Motor neuron (in vitro differentiated cells): ENCODE measurements at regions of chr7 and their contacts with region 1.

Region 1: GRCh38 chr7:117119192-117119924 is 166.1 kb downstream of the ST7 start:
- ATAC-seq: peak in 2 of 8 experiments; percentile 26 to 32
- H3K4me3 ChIP-seq: no peak overlapping the region
- H3K27ac ChIP-seq: no peak overlapping the region
- H3K4me1 ChIP-seq: peaks cover 2 to 9% of the 10 kb centered on the region in 2 donors

Region 2: GRCh38 chr7:116636997-116637396 is 482.4 kb before region 1 on chr7:
- in situ Hi-C with region 1: no loop called
- ATAC-seq: no peak
- H3K4me3 ChIP-seq: no peak overlapping the region
- H3K27ac ChIP-seq: no peak overlapping the region
- H3K4me1 ChIP-seq: no peaks in the 10 kb centered on the region

Region 3: GRCh38 chr7:116984917-116985316 is 134.4 kb before region 1 on chr7:
- in situ Hi-C with region 1: loop called in 2 of 9 experiments (anchors 25 kb)
- ATAC-seq: peak in 3 of 8 experiments; percentile 31 to 66 (median 51)
- H3K4me3 ChIP-seq: no peak overlapping the region
- H3K27ac ChIP-seq: no peak overlapping the region
- H3K4me1 ChIP-seq: no peaks in the 10 kb centered on the region

Region 4: GRCh38 chr7:117014673-117015133 is 104.7 kb before region 1 on chr7:
- in situ Hi-C with region 1: loop called in 2 of 9 experiments (anchors 25 kb)
- ATAC-seq: peak; percentile 42 to 84 (median 68)
- H3K4me3 ChIP-seq: peak overlapping the region in 3 of 5 donors; percentile 8 to 14 (median 10)
- H3K27ac ChIP-seq: no peak overlapping the region
- H3K4me1 ChIP-seq: peaks cover 5 to 25% of the 10 kb centered on the region in 2 donors

Region 5: DNA sequence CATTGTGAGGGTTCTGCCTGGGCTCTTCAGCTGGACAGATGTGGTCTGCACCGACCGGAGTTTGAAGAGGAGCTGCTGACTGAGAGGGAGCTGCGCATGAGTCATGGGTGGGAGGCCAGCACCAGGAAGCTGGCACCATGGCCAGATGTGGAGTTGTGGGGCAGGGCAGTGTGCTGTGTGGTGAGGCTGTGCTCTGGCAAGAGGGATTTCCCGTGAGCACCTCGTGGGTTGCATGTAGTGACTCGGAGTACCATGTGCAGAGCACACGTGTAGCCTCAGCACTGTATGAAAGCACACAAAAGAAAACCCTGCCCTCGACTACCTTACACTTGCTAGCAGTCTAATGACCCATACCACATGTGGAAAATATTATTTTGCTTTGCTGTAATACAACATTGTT is 100.1 kb after region 1 on chr7:
- in situ Hi-C with region 1: no loop called
- ATAC-seq: peak in 2 of 8 experiments; percentile 18 to 22
- H3K4me3 ChIP-seq: no peak overlapping the region
- H3K27ac ChIP-seq: no peak overlapping the region
- H3K4me1 ChIP-seq: peaks cover 0 to 18% of the 10 kb centered on the region in 2 donors

Region 6: GRCh38 chr7:117612642-117613041 is 493.3 kb after region 1 on chr7:
- in situ Hi-C with region 1: no loop called
- ATAC-seq: no peak
- H3K4me3 ChIP-seq: no peak overlapping the region
- H3K27ac ChIP-seq: no peak overlapping the region
- H3K4me1 ChIP-seq: no peaks in the 10 kb centered on the region

Region 7: DNA sequence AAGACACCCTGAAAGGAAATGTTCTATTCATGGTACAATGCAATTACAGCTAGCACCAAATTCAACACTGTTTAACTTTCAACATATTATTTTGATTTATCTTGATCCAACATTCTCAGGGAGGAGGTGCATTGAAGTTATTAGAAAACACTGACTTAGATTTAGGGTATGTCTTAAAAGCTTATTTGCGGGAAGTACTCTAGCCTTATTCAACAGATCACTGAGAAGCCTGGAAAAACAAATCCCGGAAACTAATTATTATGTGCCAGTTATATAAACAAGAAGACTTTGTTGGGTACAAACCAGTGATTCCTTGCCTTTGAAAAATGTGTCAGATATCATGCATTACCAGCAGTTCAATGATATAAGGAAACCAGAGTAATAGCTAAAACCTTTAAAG is 520.6 kb after region 1 on chr7:
- in situ Hi-C with region 1: no loop called
- ATAC-seq: no peak
- H3K4me3 ChIP-seq: no peak overlapping the region
- H3K27ac ChIP-seq: no peak overlapping the region
- H3K4me1 ChIP-seq: no peaks in the 10 kb centered on the region